WTC11 (cell line): ENCODE measurements at regions of chr6 and their contacts with region 1.

Region 1: GRCh38 chr6:19024737-19025136 is 637.6 kb downstream of the RNF144B start:
- DNase-seq: peak; percentile 43
- ATAC-seq: peak; percentile 92
- H3K4me3 Mint-ChIP-seq: no peak overlapping the region
- H3K27ac Mint-ChIP-seq: no peak overlapping the region
- H3K4me1 Mint-ChIP-seq: peaks cover 6% of the 10 kb centered on the region
- H3K27me3 Mint-ChIP-seq: no peaks in the 10 kb centered on the region
- CTCF ChIP-seq: peak; percentile 18

Region 2: DNA sequence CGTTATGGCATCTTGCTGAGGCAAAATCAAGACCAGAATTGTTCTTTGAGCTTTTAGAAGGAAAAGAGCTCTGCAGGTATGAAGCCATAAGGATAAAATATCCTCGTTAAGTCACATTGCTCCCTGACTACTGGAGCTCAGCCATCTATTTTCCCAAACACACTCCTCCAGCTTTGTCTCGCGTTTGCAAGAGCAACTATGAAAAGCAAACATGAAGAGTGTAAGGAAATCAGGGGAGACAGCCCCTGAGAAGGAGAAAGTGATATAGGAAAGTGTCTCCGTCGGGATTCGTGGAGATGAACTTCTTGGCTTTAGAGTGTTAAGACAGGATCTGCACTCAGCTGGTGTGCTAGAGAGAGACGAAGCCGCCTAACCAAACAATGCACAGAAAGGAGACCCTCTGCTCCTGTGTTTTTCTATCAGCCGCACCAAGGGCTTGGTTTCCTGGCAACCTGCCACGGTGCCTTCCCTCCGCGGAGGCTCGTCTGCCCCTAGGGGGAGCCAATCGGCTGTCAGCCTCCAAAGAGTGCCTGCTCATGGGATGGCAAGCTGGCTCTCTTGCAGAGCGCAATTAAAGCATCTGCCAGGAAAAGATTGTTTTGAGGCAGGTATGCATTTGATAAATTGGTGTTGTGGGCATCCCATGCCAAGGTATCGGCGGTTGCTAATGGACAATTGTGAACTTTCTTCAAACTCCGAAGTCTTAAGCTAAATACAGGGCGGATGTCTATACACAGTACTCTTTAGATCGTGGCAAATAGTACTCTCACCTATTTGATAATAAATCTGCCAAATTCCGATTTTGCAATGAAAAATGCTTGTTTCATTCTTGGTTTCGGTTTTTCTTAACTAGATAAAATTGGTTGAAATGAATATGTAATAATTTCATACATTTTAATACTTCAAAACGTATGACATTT is 34.4 kb before region 1 on chr6:
- CTCF ChIA-PET with region 1: interaction called, 15 read pairs
- POLR2A ChIA-PET with region 1: no interaction called
- DNase-seq: peak; percentile 88
- ATAC-seq: peak; percentile 98
- H3K4me3 Mint-ChIP-seq: peak overlapping the region; percentile 34; the same call in 1 of the 2 replicates
- H3K27ac Mint-ChIP-seq: no peak overlapping the region
- H3K4me1 Mint-ChIP-seq: peaks cover 24% of the 10 kb centered on the region
- H3K27me3 Mint-ChIP-seq: peaks cover 5% of the 10 kb centered on the region
- CTCF ChIP-seq: peak; percentile 52; the same call in 1 of the 2 replicates

Region 3: GRCh38 chr6:18997375-18997826 is 27.3 kb before region 1 on chr6:
- CTCF ChIA-PET with region 1: interaction called, 25 read pairs
- POLR2A ChIA-PET with region 1: no interaction called
- DNase-seq: peak; percentile 11
- ATAC-seq: peak; percentile 100
- H3K4me3 Mint-ChIP-seq: no peak overlapping the region
- H3K27ac Mint-ChIP-seq: no peak overlapping the region
- H3K4me1 Mint-ChIP-seq: peaks cover 6% of the 10 kb centered on the region
- H3K27me3 Mint-ChIP-seq: no peaks in the 10 kb centered on the region
- CTCF ChIP-seq: peak; percentile 51

Region 4: DNA sequence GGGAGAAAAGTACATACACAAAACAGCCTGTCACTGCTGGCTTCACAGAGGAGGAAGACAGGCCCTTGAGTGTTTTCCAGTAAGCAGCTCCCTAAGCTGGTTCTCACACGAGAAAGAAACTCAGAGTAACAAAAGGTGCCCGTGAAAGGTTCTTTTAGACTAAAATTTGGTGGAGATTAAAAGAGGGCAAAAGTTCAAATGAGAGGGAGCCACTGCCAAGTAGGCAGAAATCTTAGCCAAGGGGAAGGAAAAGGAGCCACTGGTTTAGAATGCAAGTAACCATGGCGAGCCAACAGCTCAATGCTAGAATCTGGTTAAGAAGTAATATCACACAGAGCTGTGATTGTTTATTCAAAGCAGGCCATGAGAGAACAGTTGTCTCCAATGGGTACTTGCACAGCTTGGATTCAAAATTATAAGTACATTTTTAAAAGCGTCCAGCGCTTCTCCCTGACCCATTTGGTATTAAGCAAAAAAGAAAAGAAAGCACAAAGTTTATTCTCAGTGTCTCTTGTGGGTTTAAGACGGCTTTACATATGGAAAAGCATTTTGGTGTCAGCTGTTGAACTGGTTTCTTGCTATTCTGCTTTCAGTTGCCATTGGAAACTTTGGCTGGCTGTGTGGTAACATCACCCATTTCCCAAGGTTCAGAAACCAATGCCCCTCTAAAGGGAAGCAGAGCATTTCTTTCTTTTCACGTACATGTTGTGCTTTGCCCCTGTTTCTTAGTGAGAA is 10.9 kb after region 1 on chr6:
- CTCF ChIA-PET with region 1: interaction called, 29 read pairs
- POLR2A ChIA-PET with region 1: no interaction called
- DNase-seq: no peak
- ATAC-seq: no peak
- H3K4me3 Mint-ChIP-seq: no peak overlapping the region
- H3K27ac Mint-ChIP-seq: no peak overlapping the region
- H3K4me1 Mint-ChIP-seq: peaks cover 5% of the 10 kb centered on the region
- H3K27me3 Mint-ChIP-seq: no peaks in the 10 kb centered on the region
- CTCF ChIP-seq: no peak

Region 5: DNA sequence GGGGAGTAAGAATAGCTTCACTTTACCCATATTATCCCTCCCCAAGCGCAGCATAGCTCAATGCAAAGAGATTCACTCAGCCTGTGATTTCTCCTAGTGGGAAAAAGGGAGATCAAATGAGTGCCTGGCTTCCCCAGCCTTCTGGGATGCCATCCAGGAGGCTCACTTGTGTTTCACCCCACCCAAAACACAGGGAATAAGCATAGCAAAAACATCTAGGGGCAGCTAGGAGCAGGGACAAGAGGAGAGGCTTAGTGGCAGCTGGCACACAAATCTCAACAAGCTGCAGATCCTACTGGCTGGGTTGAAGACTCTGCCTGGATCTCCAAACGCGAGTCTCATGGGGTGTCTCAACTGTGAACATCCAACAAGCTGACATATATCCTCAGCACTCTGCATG is 78.2 kb after region 1 on chr6:
- CTCF ChIA-PET with region 1: interaction called, 13 read pairs
- POLR2A ChIA-PET with region 1: no interaction called
- DNase-seq: no peak
- ATAC-seq: no peak
- H3K4me3 Mint-ChIP-seq: no peak overlapping the region
- H3K27ac Mint-ChIP-seq: no peak overlapping the region
- H3K4me1 Mint-ChIP-seq: no peaks in the 10 kb centered on the region
- H3K27me3 Mint-ChIP-seq: peaks cover 3% of the 10 kb centered on the region; the same call in 1 of the 2 replicates
- CTCF ChIP-seq: no peak

Region 6: DNA sequence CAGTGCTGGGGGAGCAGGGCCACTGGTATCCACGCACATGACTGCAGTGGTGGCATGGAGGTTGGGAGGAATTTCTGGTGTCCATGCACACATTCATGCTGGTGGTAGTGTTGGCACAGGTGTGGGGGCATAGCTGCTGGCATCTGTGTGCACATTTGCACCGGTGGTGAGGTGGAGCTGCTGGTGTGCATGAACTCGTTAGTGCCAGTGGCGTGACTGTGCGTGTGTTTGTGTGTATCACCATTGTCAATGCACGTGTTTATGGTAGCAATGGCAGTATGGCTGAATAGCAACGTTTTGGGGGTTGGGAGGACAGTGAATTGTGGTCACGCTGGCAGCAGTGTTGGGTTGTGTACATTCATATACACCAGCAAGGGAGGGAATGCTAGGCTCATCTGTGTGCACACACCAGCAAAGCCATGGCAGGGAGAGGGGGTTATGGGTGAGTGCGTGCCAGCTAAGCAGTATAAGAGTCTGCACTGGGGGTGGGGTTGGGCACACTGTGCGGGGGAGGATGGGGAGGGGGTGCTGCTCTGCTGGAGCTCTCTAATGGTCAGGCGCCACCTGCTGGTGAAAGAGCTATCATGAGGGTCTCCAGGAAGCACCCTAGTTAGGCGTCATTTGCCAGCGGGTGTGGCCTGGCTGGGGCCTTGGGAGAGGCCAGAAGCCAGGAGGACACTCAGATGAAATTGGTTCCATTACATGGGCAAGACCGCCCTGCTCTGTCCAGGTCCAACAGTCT is 186.3 kb after region 1 on chr6:
- CTCF ChIA-PET with region 1: interaction called, 38 read pairs
- POLR2A ChIA-PET with region 1: no interaction called
- DNase-seq: peak; percentile 83
- ATAC-seq: peak; percentile 99
- H3K4me3 Mint-ChIP-seq: no peak overlapping the region
- H3K27ac Mint-ChIP-seq: no peak overlapping the region
- H3K4me1 Mint-ChIP-seq: peaks cover 2% of the 10 kb centered on the region; the same call in 1 of the 2 replicates
- H3K27me3 Mint-ChIP-seq: peaks cover 3% of the 10 kb centered on the region; the same call in 1 of the 2 replicates
- CTCF ChIP-seq: peak; percentile 74

Region 7: DNA sequence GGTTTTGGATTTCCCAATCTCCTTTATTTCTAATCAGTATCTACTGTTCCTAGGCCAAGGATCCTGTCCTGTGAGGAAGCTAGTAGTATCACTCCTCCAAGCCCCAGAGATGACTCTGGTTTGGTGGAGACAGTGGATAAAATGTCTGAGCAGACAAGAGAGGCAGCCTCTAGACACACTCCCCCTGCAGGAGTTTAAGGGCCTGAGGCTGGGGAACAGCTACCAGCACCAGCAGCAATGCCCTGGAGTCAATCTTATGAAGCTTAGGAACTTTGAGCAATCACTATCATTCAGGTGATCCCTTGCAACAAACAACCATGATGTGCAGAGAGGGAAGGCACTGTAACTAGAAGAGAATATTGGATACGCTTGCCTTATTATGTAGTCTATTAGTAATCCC is 427.8 kb after region 1 on chr6:
- CTCF ChIA-PET with region 1: interaction called, 31 read pairs
- POLR2A ChIA-PET with region 1: no interaction called
- DNase-seq: peak; percentile 21
- ATAC-seq: peak; percentile 96
- H3K4me3 Mint-ChIP-seq: no peak overlapping the region
- H3K27ac Mint-ChIP-seq: no peak overlapping the region
- H3K4me1 Mint-ChIP-seq: no peaks in the 10 kb centered on the region
- H3K27me3 Mint-ChIP-seq: no peaks in the 10 kb centered on the region
- CTCF ChIP-seq: no peak